Dorsolateral prefrontal cortex (tissue), 120 donors: ENCODE measurements at regions of chr1 and their contacts with region 1.

Region 1: DNA sequence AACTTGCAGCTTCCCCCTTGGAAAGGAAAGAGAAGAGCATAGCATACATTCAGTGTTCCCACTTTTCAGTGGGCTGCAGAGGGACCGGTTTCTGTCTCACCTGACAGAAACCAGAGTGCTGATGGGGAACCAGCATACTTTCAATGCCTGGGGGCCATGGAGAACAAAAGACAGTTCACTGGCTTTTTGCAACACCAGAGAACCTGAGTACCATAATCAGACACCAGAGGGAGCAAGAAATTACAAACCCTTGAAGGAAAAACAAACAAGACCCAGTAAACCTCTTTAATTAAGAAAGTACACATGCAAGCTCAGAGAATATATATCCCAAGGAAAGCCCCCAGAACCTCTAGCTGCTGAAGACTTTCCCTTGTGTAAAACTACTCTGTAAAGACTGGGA is 51.1 kb downstream of the CSMD2 start:
- DNase-seq: no peak
- H3K4me3 ChIP-seq: no peak overlapping the region
- H3K27ac ChIP-seq: no peak overlapping the region
- H3K27me3 ChIP-seq: no peaks in the 10 kb centered on the region
- CTCF ChIP-seq: peak in 52 of 56 donors; percentile 23 to 64 (median 51)

Region 2: GRCh38 chr1:33735621-33736020 is 378.3 kb before region 1 on chr1:
- intact Hi-C with region 1: loop called in 1 of 2 experiments (anchors 5 kb)
- DNase-seq: no peak
- H3K4me3 ChIP-seq: no peak overlapping the region
- H3K27ac ChIP-seq: no peak overlapping the region
- H3K27me3 ChIP-seq: no peaks in the 10 kb centered on the region
- CTCF ChIP-seq: peak in 51 of 56 donors; percentile 16 to 64 (median 45)

Region 3: DNA sequence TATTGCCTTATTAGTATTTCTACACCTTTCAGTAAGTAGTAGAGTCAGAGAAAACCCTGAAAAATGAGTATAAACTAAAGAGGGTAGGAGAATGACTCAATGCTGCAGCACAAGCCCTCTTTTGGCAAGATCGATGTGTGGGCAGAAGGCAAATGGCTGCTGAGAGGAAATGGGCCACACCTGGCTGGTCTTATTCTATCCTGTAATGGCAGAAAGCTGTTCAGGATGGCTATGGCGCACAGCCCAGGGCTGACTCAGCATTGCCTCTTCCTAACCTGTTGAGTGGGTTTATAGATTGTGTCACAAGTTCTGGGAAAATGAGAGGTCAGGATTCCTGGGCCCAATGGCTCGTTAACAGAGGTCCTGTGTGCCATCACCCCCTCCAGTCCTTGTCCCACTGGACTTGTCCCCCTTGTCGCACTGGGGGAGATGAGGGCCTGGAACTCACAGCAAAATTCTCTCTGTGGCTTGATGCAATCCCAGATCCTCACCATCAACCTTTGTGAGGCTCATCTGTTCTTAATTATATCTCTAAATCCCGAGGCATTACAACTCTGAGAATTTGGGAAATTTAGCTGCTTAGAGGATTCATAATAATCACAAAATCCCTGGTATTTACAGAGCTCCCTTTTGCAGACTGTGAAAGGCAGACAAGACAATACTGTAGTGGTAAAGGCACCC is 236.8 kb before region 1 on chr1:
- intact Hi-C with region 1: loop called in 1 of 2 experiments (anchors 10 kb)
- DNase-seq: peak in 9 of 10 donors; percentile 29 to 82 (median 65)
- H3K4me3 ChIP-seq: no peak overlapping the region
- H3K27ac ChIP-seq: no peak overlapping the region
- H3K27me3 ChIP-seq: no peaks in the 10 kb centered on the region
- CTCF ChIP-seq: no peak

Region 4: DNA sequence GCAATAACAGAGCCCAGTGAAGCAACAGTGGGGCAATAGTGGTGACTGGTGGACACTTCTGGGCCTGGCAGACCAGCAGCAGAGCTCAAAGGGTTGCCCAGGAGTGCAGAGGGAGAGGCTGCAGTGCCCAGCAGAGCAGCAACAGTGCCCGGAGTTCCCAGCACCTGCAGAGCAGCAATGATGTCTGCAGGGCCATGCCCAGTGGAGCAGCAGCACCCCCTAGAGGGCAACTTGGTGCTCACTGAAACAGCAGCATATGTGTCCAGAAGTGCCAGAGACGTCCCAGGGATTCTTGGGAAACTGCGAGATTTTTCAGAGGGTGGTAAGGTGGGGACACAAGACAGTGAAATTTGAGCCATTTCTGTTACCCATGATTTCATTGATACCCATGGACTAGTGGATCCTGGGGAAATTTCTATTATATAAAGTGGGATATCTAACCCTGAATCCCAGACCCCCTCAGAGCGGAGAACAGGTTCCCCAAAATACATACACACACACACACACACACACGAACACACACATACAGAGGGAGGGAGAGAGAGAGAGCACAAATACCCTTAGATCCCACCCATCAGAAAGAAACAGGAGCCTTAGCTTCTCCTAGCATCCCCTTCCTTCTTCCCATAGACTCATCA is 484.1 kb after region 1 on chr1:
- intact Hi-C with region 1: loop called in 1 of 2 experiments (anchors 5 kb)
- DNase-seq: peak; percentile 53 to 94 (median 87)
- H3K4me3 ChIP-seq: no peak overlapping the region
- H3K27ac ChIP-seq: no peak overlapping the region
- H3K27me3 ChIP-seq: peaks cover 0 to 7% (median 0%) of the 10 kb centered on the region in 45 donors
- CTCF ChIP-seq: peak; percentile 53 to 93 (median 87)